ENCODE measurements at regions of chr9 and their contacts with region 1.

Region 1: GRCh38 chr9:103319979-103320378 is 324.8 kb downstream of the CYLC2 start:
- DNase-seq: no peak

Region 2: DNA sequence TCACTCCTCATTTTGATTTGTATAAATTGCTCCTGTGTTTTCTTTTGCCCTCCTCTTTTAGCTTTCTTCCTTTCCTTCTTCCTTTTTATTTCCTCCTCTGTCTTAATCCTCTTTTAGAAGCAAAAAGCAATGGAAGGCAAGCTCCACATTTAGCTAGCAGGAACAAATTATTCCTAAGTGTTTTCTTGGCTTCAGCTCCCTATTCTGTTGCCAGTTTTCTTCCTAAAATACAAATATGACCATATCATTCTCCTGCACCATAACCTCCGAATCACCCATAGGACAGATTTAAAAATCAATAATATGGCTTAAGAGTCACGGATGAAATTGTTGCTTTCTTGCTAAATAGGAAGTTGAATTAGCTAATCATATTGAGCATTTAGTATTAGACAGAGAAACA is 1630.9 kb before region 1 on chr9:
- intact Hi-C with region 1: loop called in 1 of 2 experiments (anchors 5 kb)
- DNase-seq: no peak

Region 3: GRCh38 chr9:103355000-103355399 is 35.0 kb after region 1 on chr9:
- intact Hi-C with region 1: no loop called
- DNase-seq: no peak

Region 4: DNA sequence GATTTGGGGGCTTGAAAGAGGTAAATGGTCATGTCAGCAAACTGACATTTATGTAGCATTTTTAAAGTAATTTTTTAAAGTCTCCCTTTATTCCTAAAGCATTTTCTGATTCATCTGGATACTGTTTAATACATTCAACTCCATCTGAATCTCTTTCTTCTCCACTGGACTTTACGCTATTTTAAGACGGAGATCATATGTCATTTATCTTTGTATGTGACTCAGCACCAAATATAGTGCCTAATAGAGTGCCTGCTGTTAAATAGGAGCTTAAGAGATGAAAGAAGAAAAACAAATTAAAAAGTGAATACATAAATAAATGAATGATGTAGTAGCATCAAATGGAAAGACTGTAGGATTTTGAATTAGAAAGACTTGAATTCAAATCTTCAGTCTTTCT is 225.3 kb after region 1 on chr9:
- intact Hi-C with region 1: no loop called
- DNase-seq: no peak